Activated CD8-positive, alpha-beta T cell treated with anti-CD3 and anti-CD28 coated beads for 36 hours (primary cell): ENCODE measurements at regions of chr1 and their contacts with region 1.

Region 1: DNA sequence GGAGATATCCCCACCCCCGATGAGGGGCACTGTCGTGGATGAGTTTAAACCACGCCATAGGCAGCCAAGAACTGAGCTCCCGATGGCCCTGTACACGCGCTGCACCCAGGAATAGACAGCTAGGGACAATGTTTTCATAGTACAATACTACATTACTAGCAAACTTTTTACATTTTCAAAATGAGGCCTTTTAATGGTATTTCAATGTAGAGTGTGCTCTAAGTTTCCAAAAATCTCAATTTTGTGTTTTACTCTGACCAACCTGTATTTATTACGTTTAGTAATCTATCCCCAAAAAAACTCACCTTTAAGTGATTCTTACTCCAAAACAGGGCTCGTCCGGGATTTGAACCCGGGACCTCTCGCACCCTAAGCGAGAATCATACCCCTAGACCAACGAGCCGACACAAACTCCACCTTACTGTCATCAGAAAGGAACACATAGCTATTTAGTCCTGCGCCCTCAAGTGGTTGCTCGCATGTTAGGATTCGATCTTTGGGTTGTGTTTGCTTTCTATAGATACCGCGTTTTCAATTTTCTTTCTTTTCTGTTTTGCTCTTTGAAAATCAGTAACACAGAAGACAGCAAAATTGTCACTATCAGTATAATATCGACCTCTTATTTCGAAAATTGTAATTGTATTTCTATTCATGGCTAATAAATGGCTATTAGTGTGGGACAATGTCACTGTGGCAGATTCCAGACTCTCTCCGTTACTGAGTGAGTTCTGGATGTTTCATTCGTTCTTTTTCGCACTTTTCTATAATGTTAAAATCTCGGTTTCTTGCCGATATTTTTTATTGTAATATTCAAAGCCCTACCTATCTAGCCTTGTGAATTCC is 6.4 kb upstream of the MPZL1 start:
- DNase-seq: peak; percentile 95
- ATAC-seq: peak; percentile 58
- H3K4me3 Mint-ChIP-seq: peak overlapping the region; percentile 90
- H3K27ac Mint-ChIP-seq: peak overlapping the region; percentile 95
- H3K4me1 Mint-ChIP-seq: peaks cover 28% of the 10 kb centered on the region
- H3K27me3 Mint-ChIP-seq: peaks cover 6% of the 10 kb centered on the region
- CTCF ChIP-seq: peak; percentile 87

Region 2: DNA sequence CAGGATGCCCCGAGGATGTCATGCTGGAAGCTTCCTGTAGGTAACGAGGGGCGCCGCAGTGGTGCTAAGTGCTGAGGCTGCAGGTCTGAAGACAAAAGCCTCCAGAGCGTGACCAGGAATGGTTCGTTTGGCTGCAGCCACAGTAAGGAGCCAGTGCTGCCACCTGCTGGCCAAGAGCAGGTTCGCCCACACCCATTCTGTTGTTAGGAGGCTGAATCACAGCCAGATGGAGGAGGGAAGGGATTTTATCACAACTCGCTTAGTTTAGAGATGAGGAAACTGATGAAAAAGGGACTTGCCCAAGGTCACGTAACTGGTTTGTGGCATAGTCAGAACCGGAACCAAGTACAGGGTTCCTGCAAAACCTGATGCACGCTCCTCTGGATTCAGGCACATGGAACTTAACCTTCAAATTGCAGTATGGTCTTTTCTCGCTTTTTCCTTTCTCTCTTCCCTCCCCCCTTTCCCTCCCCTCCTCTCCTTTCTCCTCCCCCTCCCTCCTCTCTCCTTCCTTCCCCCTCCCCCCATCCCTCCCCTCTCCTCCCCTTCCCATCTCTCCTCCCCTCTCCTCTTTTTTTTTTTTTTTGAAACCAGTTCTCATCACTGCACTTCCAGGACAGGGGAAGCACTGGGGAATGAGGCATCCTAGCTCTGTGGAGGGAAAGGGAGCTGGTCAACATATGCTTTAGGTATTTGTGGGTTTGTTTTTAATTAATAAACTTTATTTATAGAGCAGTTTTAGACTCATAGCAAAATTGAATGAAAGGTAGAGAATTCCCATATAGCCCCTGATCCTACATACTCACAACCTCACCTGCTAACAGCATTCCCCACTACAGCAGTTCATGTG is 88.2 kb after region 1 on chr1:
- CTCF ChIA-PET with region 1: interaction called, 13 read pairs
- POLR2A ChIA-PET with region 1: interaction called, 6 read pairs
- intact Hi-C with region 1: loop called (anchors 2 kb)
- DNase-seq: peak; percentile 97
- ATAC-seq: peak; percentile 94
- H3K4me3 Mint-ChIP-seq: peak overlapping the region; percentile 57
- H3K27ac Mint-ChIP-seq: peak overlapping the region; percentile 85
- H3K4me1 Mint-ChIP-seq: peaks cover 28% of the 10 kb centered on the region
- H3K27me3 Mint-ChIP-seq: no peaks in the 10 kb centered on the region
- CTCF ChIP-seq: peak; percentile 97

Region 3: DNA sequence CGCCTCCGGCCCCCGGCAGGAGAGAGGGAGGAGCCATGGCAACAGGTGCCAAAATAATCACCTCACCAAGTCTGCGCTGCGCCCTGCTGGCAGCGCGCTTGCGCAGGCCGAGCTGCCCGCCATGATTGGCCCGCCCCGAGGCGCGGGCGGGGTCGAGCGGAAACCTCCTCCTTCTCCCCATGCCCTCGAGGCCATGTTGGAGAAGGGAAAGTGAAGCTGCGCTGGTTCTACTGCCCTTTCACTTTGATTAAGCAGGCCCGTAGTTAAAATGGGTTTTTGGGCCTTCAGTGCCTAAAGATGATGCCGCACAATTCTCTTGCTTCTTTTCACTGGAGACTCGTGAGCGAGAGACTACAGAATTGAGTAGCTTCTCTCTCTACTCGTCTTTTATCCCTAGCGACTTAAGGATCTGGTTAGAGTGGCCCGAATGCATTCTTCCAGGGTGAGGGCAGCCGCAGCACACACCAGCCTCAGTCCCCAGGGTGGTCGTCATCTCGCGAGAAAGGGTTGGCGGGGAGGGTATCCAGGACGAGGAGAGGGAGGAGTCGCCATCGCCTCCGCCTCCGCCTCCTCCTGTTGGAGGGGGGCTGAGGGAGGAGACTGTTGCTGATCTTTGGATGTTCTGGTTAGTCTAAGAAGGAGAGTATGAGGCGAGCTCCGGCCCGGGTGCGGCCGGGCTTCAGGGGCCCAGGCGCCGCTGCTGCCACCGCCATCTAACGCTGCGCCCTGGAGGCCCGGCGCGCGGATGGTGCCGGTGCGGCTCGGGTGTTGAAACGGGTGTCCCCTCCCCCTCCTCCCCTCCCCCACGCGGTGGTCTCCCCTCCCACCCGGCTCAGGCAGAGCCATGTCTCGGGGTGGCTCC is 220.9 kb after region 1 on chr1 and contains the start of gene DCAF6:
- CTCF ChIA-PET with region 1: interaction called, 3 read pairs
- POLR2A ChIA-PET with region 1: interaction called, 9 read pairs
- intact Hi-C with region 1: loop called (anchors 10 kb)
- DNase-seq: peak; percentile 96
- ATAC-seq: peak; percentile 83
- H3K4me3 Mint-ChIP-seq: peak within 1 kb of the TSS; percentile 90
- H3K27ac Mint-ChIP-seq: peak within 1 kb of the TSS; percentile 100
- H3K4me1 Mint-ChIP-seq: peaks cover 28% of the 10 kb centered on the region
- H3K27me3 Mint-ChIP-seq: no peaks in the 10 kb centered on the region
- CTCF ChIP-seq: no peak
- total RNA-seq, gene DCAF6: 21.6 to 22.6 TPM